ENCODE measurements at regions of chr16 and their contacts with region 1.

Region 1: DNA sequence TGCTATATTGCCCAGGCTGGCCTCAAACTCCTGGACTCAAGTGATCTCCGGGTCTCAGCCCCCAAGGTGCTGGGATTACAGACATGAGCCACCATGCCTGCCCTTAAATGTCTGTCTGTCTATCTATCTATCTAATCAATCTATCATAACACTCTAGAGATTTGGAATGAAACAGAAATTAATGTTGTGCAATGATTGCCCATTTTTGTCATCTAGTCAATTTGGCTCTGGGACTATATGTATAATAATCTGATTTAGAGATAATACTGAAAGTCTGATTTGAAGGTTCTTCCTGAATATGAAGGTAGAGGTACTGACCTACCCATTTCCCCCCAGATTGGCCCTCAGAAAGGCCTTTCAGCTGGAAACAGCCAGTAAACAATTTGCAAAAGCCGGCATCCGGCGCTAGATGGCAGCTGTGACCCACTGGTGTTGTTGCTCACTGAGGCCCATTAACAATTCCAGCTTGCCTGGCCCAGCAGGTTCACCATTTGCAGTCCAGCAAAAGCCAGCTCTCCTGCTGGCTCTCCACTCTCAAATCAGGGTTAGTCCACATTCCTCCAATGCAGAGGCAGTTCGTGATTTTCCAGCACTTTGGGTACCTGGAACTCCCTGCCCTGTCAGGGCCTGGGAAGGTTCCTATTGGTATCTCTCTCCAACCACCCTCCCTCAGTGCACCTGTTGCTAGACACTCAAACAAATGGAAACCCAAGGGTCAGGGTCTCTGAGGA is 22.9 kb upstream of the C16orf87 start:
- DNase-seq: peak; percentile 74
- ATAC-seq: peak; percentile 69
- H3K4me3 ChIP-seq: no peak overlapping the region
- H3K4me3 Mint-ChIP-seq: no peak overlapping the region
- H3K27ac ChIP-seq: no peak overlapping the region
- H3K27ac Mint-ChIP-seq: peak overlapping the region; percentile 7
- H3K4me1 ChIP-seq: peaks cover 6 to 18% of the 10 kb centered on the region in 2 donors
- H3K4me1 Mint-ChIP-seq: peaks cover 17% of the 10 kb centered on the region
- H3K27me3 ChIP-seq: no peaks in the 10 kb centered on the region
- H3K27me3 Mint-ChIP-seq: no peaks in the 10 kb centered on the region
- CTCF ChIP-seq: peak; percentile 80

Region 2: DNA sequence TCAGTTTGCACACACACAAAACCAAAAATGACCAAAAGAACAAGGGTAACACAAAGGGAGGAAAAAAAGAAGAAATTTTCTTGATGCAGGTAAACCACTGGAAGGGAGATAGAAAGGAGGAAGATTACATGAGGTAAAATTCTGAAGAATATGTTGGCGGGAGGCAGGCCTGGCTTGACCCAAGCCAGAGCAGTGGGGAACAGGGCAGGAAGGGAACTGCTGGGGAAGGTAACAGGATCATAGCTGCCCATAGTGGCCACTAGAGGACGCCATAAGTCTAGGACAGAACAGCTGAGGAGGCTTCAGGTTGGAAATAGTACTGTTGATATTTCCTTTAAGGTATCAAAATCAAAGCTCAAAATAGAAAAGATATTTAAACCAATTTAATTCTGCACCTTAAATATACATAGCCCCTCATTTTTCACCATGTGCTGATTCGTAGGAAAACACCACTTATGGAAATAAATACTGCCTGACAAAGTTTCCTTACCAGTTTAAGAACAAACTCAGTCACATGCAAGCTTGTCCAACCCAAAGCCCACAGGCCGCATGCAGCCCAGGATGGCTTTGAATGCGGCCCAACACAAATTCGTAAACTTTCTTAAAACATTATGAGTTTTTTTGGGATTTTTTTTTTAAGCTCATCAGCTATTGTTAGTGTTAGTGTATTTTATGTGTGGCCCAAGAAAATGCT is 180.4 kb before region 1 on chr16:
- CTCF ChIA-PET with region 1: interaction called, 37 read pairs
- POLR2A ChIA-PET with region 1: no interaction called
- intact Hi-C with region 1: no loop called
- DNase-seq: peak; percentile 78
- ATAC-seq: peak; percentile 92
- H3K4me3 ChIP-seq: no peak overlapping the region
- H3K4me3 Mint-ChIP-seq: no peak overlapping the region
- H3K27ac ChIP-seq: no peak overlapping the region
- H3K27ac Mint-ChIP-seq: no peak overlapping the region
- H3K4me1 ChIP-seq: no peaks in the 10 kb centered on the region
- H3K4me1 Mint-ChIP-seq: no peaks in the 10 kb centered on the region
- H3K27me3 ChIP-seq: no peaks in the 10 kb centered on the region
- H3K27me3 Mint-ChIP-seq: no peaks in the 10 kb centered on the region
- CTCF ChIP-seq: peak; percentile 97

Region 3: DNA sequence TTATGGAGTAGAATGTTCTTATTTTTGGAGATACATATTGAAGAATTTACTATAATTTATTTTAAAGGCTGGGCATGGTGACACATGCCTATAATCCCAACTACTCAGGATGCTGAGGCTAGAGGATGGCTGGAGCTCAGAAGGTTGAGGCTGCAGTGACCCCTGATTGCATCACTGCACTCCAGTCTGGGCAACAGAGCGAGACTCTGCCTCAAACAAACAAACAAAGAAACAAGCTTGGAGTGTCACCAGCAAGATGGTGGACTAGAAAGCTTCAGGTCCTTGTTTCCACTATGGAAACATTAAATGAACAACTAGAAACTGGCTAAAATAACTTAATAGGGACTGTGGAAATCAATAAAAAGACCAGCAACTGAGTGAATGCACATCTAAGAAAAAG is 12.4 kb after region 1 on chr16:
- CTCF ChIA-PET with region 1: interaction called, 13 read pairs
- POLR2A ChIA-PET with region 1: no interaction called
- intact Hi-C with region 1: no loop called
- DNase-seq: no peak
- ATAC-seq: no peak
- H3K4me3 ChIP-seq: no peak overlapping the region
- H3K4me3 Mint-ChIP-seq: no peak overlapping the region
- H3K27ac ChIP-seq: no peak overlapping the region
- H3K27ac Mint-ChIP-seq: no peak overlapping the region
- H3K4me1 ChIP-seq: peaks cover 5 to 13% of the 10 kb centered on the region in 2 donors
- H3K4me1 Mint-ChIP-seq: peaks cover 9% of the 10 kb centered on the region
- H3K27me3 ChIP-seq: no peaks in the 10 kb centered on the region
- H3K27me3 Mint-ChIP-seq: no peaks in the 10 kb centered on the region
- CTCF ChIP-seq: no peak

Region 4: DNA sequence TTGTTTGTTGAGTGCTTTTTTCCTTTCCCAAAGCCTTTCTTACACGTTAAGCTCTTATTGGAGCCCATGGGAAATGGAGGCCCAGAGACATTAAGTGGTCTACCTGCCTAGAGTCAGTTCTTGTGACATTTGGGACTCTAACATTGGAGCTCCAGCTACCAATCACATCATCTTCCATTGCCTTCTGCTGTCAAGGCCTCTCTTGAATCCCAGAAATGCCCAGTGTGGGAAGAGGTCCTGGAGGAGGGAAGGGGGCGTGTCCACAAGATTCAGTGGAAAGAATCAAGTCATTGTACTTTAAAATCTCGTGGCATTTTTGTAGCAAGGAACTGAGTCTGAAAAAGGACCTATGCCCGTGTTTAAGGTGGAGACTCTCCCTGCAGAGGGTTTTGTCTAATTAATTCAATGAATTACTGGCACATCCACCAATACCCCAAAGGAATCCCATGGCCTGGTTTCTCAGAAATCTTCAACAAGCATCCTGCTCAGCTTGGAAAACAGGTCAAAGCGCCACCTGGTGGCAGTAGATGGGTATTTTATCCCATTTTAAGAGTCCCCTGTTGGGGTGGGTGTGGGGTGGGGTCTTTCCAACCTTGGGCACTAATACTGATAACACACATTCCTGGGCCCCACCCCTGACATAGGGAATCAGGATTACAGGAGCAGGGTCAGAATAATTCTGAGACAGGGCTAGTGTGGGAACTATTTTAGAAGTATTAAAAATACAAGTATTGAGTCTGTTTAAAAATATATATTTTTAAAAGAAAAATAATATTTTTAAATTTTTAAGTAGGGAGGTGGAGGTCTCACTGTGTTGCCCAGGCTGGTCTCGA is 54.9 kb after region 1 on chr16:
- CTCF ChIA-PET with region 1: interaction called, 102 read pairs
- POLR2A ChIA-PET with region 1: no interaction called
- intact Hi-C with region 1: loop called (anchors 1 kb)
- DNase-seq: peak; percentile 72
- ATAC-seq: peak; percentile 37
- H3K4me3 ChIP-seq: no peak overlapping the region
- H3K4me3 Mint-ChIP-seq: no peak overlapping the region
- H3K27ac ChIP-seq: no peak overlapping the region
- H3K27ac Mint-ChIP-seq: peak overlapping the region; percentile 74
- H3K4me1 ChIP-seq: peaks cover 40 to 63% of the 10 kb centered on the region in 2 donors
- H3K4me1 Mint-ChIP-seq: peaks cover 49% of the 10 kb centered on the region
- H3K27me3 ChIP-seq: no peaks in the 10 kb centered on the region
- H3K27me3 Mint-ChIP-seq: no peaks in the 10 kb centered on the region
- CTCF ChIP-seq: peak; percentile 85

Region 5: GRCh38 chr16:46929378-46930332 is 75.8 kb after region 1 on chr16:
- CTCF ChIA-PET with region 1: interaction called, 118 read pairs
- POLR2A ChIA-PET with region 1: interaction called, 3 read pairs
- intact Hi-C with region 1: loop called (anchors 1 kb)
- DNase-seq: peak; percentile 76
- ATAC-seq: peak; percentile 73
- H3K4me3 ChIP-seq: no peak overlapping the region
- H3K4me3 Mint-ChIP-seq: no peak overlapping the region
- H3K27ac ChIP-seq: no peak overlapping the region
- H3K27ac Mint-ChIP-seq: no peak overlapping the region
- H3K4me1 ChIP-seq: peaks cover 5 to 18% of the 10 kb centered on the region in 2 donors
- H3K4me1 Mint-ChIP-seq: peaks cover 7% of the 10 kb centered on the region
- H3K27me3 ChIP-seq: no peaks in the 10 kb centered on the region
- H3K27me3 Mint-ChIP-seq: no peaks in the 10 kb centered on the region
- CTCF ChIP-seq: peak; percentile 96

Region 6: DNA sequence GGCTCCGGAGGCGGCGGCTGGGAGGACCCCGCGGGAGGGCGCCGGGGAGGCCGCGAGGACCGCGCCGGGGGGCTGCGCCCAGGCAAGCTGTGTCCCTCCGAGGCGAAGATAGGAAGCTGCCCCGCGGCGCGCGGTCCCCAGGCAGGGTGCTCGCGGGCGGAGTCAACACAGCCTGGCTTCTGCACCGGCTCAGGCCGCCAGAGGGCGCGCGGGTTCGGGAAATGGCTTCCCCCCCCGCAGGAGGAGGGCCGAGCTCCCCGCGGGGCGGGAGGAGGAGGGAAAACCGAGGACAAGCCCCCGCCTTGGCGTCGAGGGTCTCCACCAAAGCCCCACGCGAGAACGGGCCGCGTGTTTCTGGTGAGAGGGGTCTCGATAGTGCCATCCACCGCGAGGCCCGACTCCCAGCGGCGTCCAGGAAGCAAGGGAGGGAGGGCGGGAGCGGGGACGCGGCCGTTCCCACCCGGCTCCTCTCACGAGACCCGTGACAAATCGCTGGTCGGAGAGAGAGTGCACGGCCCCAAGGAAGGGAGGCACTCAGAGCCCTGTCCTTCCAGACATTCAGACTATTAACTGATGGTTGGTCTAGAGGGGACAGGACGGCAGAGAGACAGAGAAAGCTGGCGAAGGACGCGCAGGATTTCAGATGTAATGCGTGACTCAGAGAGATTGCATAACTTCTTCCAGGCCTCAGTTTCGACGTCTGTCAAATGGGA is 184.0 kb after region 1 on chr16:
- CTCF ChIA-PET with region 1: interaction called, 14 read pairs
- POLR2A ChIA-PET with region 1: no interaction called
- intact Hi-C with region 1: loop called (anchors 1 kb)
- DNase-seq: peak; percentile 90
- ATAC-seq: peak; percentile 98
- H3K4me3 ChIP-seq: peak overlapping the region; percentile 53 to 90 (median 63)
- H3K4me3 Mint-ChIP-seq: peak overlapping the region; percentile 90
- H3K27ac ChIP-seq: peak overlapping the region in 1 of 2 donors; percentile 52
- H3K27ac Mint-ChIP-seq: peak overlapping the region; percentile 68
- H3K4me1 ChIP-seq: peaks cover 3 to 26% of the 10 kb centered on the region in 2 donors
- H3K4me1 Mint-ChIP-seq: peaks cover 25% of the 10 kb centered on the region
- H3K27me3 ChIP-seq: no peaks in the 10 kb centered on the region
- H3K27me3 Mint-ChIP-seq: no peaks in the 10 kb centered on the region
- CTCF ChIP-seq: peak; percentile 95

Region 7: DNA sequence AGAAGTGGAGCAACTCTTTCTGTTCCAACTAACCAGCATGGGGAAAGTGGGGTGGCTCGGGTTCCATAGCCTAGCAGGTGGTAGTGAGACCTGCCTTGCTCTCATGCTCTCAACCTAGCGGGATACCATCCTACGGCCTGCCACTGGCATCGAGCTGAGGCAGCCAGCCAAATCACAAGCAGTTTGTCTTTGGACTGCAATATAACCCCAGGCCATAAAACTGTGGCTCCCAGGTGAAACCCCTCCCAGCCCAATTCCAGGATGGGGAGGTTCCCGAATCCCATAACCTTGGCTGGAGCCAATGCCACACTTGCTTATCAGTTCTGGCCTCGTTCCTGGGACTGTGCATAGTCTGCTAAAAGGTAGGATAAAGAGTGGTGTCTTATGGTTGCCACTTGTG is 445.7 kb after region 1 on chr16:
- CTCF ChIA-PET with region 1: no interaction called
- POLR2A ChIA-PET with region 1: no interaction called
- intact Hi-C with region 1: no loop called
- DNase-seq: no peak
- ATAC-seq: no peak
- H3K4me3 ChIP-seq: no peak overlapping the region
- H3K4me3 Mint-ChIP-seq: no peak overlapping the region
- H3K27ac ChIP-seq: no peak overlapping the region
- H3K27ac Mint-ChIP-seq: no peak overlapping the region
- H3K4me1 ChIP-seq: no peaks in the 10 kb centered on the region
- H3K4me1 Mint-ChIP-seq: no peaks in the 10 kb centered on the region
- H3K27me3 ChIP-seq: no peaks in the 10 kb centered on the region
- H3K27me3 Mint-ChIP-seq: no peaks in the 10 kb centered on the region
- CTCF ChIP-seq: no peak

Measured in B cell (primary cell).